ENCODE measurements at regions of chr6 and their contacts with region 1.

Region 1: DNA sequence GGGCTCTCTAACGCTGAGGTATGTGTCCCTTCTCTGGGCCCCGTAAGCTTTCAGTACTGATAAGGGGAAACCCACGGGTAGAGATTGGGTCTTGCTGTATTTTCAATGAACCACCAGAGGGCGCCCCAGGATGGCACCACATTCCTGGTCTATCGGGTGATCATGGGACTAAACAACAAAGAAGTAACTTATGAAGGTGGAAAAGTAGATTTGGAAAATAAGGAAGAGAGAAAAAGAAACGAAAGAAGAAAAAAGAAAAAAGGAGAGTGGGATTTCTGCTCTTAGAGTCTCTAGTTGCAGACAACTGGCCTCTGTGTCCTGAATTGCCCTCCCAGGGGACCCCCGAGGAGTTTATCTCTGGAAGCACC is 93.8 kb downstream of the GMPR start:
- DNase-seq: peak; percentile 89
- H3K4me3 ChIP-seq: peak overlapping the region; percentile 12
- H3K27ac ChIP-seq: peak overlapping the region; percentile 3
- H3K4me1 ChIP-seq: peaks cover 20% of the 10 kb centered on the region
- H3K27me3 ChIP-seq: no peaks in the 10 kb centered on the region
- CTCF ChIP-seq: peak; percentile 94

Region 2: DNA sequence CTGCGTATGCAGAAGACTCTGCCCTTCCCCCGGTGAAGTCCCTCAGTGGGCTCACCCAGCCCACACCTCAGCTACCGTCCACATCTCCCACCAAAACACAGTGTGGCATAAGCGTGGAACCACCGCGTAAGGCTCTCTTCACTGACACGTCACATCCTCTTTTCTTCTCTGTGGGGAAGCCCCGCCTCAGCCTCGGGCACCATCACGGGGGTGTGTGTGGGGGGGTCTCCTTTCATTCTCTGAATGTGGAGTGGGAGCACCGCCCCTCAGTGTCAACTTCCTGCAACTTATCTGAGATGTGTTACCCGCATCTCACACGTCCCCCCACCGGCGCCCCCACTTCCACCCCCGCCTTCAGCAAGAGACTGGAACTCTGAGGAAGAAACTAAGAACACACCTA is 1474.7 kb before region 1 on chr6:
- CTCF ChIA-PET with region 1: no interaction called
- POLR2A ChIA-PET with region 1: no interaction called
- intact Hi-C with region 1: no loop called
- DNase-seq: no peak
- H3K4me3 ChIP-seq: no peak overlapping the region
- H3K27ac ChIP-seq: no peak overlapping the region
- H3K4me1 ChIP-seq: peaks cover 12% of the 10 kb centered on the region
- H3K27me3 ChIP-seq: no peaks in the 10 kb centered on the region
- CTCF ChIP-seq: no peak

Region 3: DNA sequence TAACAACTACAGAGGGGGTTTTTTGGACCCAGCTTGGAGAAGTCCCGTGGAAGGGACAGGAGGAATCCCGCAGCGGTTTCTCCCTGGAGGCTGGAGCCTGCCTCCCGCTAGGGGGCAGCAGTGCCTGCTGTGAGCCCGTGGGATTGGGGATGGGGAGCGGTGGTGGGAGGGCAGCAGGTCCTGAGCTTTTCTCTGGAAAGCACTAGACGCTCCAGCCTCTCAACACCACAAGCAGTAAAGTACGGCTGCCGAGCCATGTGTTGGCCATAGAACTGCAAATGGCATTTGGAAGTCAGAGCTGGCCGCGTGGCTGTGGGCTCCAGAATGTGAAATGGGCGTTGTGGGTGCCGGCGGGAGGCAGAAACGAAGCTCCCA is 46.0 kb before region 1 on chr6:
- CTCF ChIA-PET with region 1: interaction called, 3 read pairs
- POLR2A ChIA-PET with region 1: no interaction called
- intact Hi-C with region 1: loop called (anchors 2 kb)
- DNase-seq: peak; percentile 77
- H3K4me3 ChIP-seq: no peak overlapping the region
- H3K27ac ChIP-seq: no peak overlapping the region
- H3K4me1 ChIP-seq: no peaks in the 10 kb centered on the region
- H3K27me3 ChIP-seq: no peaks in the 10 kb centered on the region
- CTCF ChIP-seq: peak; percentile 98

Region 4: DNA sequence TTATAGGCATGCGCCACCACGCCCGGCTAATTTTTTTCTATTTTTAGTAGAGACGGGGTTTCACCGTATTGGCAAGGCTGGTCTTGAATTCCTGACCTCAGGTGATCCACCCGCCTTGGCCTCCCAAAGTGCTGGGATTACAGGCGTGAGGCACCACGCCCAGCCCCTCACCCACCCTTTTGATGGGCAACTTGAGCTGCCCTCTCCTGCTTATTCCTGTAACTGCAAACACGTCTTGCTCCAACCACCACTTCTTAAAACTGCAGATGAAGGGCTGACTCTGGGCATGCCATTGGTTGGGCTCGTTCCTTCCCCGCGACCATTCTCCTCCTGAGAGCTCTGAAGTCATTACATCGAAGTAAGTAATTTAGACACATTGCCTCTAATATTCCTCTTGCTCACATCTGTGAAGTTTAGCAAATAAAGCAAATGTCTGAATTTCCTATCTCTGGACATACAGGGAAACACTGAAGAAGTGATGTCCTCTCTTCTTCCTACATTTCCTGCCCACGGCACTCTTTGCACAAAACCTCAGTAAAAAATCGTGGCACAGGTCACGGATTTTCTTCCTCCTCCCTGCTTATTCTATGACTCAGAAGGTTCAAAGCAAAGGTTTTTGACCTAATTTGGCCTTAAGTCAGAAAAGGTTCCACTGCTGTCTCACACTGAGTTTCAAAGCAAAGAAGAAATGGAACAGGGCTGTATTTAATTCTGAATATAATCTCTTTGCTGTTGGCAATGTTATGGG is 23.7 kb after region 1 on chr6:
- CTCF ChIA-PET with region 1: no interaction called
- POLR2A ChIA-PET with region 1: no interaction called
- intact Hi-C with region 1: no loop called
- DNase-seq: no peak
- H3K4me3 ChIP-seq: no peak overlapping the region
- H3K27ac ChIP-seq: no peak overlapping the region
- H3K4me1 ChIP-seq: no peaks in the 10 kb centered on the region
- H3K27me3 ChIP-seq: no peaks in the 10 kb centered on the region
- CTCF ChIP-seq: no peak

Region 5: DNA sequence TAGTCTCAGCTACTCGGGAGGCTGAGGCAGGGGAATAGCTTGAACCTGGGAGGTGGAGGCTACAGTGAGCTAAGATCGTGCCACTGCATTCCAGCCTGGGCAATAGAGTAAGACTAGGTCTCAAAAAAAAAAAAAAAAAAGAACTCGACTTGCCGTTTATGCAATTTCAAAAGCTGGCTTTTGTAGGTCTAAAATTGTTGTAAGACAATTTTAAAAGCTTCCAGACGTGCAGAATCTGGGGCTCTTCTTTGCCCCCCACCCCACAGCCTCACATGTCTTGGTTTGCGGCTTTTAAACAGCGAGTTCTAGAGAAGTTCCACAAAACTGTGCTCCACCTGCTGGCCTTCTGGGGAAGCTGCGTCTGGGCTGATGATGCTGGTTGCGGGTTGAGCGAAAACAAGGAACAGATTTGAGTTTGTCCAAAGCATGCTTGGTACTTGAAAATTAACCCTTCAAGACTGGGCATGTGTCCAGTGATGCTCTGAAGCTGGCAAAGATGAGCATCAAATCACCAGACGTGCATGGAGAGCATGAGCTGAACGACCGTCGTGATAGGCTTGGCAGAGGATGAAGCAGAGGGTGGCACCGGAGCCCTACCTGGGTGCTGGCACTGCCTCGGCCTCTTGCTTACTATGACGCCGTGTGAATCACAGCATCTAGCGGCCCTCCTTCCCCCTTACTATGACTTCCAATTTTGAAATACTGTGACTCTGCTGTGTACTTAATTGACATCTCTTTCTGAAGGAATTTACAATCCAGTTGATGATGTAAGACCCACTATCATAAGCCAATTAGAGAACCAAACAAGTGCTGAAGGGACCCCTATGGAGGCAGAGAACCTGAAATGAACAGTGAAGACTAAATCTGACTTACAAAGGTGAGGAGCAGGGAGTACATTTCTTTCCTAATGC is 77.6 kb after region 1 on chr6:
- CTCF ChIA-PET with region 1: interaction called, 6 read pairs
- POLR2A ChIA-PET with region 1: no interaction called
- intact Hi-C with region 1: loop called (anchors 2 kb)
- DNase-seq: peak; percentile 80
- H3K4me3 ChIP-seq: peak overlapping the region; percentile 13
- H3K27ac ChIP-seq: no peak overlapping the region
- H3K4me1 ChIP-seq: peaks cover 26% of the 10 kb centered on the region
- H3K27me3 ChIP-seq: no peaks in the 10 kb centered on the region
- CTCF ChIP-seq: peak; percentile 94

Region 6: DNA sequence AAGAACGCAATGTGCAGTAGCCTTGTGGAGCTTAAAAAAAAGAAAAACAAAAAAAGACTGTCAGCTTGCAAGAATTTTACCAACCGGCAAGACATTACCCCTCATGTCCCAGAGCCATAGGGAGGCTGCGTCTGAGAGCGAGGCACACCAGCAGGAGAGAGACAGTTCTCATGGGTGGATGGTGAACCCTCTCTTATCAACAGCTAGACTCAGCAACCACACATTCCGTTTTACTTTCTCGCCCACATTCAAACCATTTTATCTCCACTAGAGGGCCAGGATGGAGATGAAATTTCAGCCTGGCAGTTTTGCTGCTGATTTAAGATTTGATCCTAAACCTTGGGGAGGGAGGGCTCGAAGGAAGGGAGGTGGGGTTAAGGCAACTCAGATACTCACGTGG is 182.1 kb after region 1 on chr6:
- CTCF ChIA-PET with region 1: no interaction called
- POLR2A ChIA-PET with region 1: no interaction called
- intact Hi-C with region 1: loop called (anchors 5 kb)
- DNase-seq: peak; percentile 81
- H3K4me3 ChIP-seq: no peak overlapping the region
- H3K27ac ChIP-seq: no peak overlapping the region
- H3K4me1 ChIP-seq: no peaks in the 10 kb centered on the region
- H3K27me3 ChIP-seq: no peaks in the 10 kb centered on the region
- CTCF ChIP-seq: peak; percentile 67

Region 7: GRCh38 chr6:16651871-16652270 is 319.7 kb after region 1 on chr6:
- CTCF ChIA-PET with region 1: no interaction called
- POLR2A ChIA-PET with region 1: no interaction called
- intact Hi-C with region 1: no loop called
- DNase-seq: no peak
- H3K4me3 ChIP-seq: no peak overlapping the region
- H3K27ac ChIP-seq: no peak overlapping the region
- H3K4me1 ChIP-seq: no peaks in the 10 kb centered on the region
- H3K27me3 ChIP-seq: no peaks in the 10 kb centered on the region
- CTCF ChIP-seq: no peak

Region 8: DNA sequence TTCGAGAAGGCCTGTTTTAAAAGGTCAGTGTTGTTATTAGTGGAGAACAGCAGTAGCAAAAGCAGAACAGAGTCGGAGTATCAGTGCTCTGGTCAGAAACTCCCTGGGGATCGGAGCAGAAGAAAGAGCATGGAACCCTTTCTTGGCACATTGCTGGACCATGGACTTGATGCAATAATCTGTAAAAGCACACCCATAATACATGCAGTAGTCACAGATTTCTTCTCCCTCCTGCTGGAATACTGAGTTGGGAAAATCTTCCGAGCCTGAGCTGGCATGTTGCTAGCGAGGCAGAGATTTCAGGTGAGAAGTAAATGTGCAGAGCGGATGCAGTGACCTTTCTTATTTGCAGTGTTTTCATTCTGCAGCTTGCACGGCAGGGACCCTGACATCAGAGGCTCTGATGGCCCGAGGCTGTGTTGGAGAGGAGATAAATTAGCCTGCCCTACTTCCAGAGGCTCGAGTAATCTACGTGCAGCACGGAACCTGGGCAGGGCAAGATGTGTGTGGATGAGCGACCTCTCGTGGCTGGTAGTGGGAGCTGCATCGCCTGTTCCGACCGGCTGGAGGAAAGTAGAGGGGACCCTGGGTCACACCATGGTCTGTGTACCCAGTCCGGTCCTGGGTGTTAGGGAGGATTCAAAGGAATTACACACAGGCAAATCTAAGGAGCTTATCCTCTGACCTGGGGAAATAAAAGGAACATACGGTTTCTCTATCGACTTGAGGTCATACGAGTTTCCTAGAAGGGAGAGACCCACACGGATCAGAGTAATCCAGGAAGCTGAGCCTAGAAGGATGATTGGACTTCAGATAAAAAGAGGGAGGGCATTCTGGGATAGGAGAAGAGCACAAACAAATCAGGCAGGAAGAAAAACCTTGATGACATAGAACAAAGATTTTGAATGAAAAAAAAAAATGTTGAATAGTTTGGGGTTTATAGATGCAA is 632.7 kb after region 1 on chr6:
- CTCF ChIA-PET with region 1: no interaction called
- POLR2A ChIA-PET with region 1: no interaction called
- intact Hi-C with region 1: loop called (anchors 10 kb)
- DNase-seq: peak; percentile 91
- H3K4me3 ChIP-seq: no peak overlapping the region
- H3K27ac ChIP-seq: no peak overlapping the region
- H3K4me1 ChIP-seq: peaks cover 35% of the 10 kb centered on the region
- H3K27me3 ChIP-seq: no peaks in the 10 kb centered on the region
- CTCF ChIP-seq: peak; percentile 99

Region 9: GRCh38 chr6:16999491-17000436 is 667.6 kb after region 1 on chr6:
- CTCF ChIA-PET with region 1: no interaction called
- POLR2A ChIA-PET with region 1: no interaction called
- intact Hi-C with region 1: loop called (anchors 10 kb)
- DNase-seq: no peak
- H3K4me3 ChIP-seq: no peak overlapping the region
- H3K27ac ChIP-seq: no peak overlapping the region
- H3K4me1 ChIP-seq: peaks cover 22% of the 10 kb centered on the region
- H3K27me3 ChIP-seq: no peaks in the 10 kb centered on the region
- CTCF ChIP-seq: no peak

Region 10: GRCh38 chr6:17086469-17086868 is 754.3 kb after region 1 on chr6:
- CTCF ChIA-PET with region 1: no interaction called
- POLR2A ChIA-PET with region 1: no interaction called
- intact Hi-C with region 1: loop called (anchors 2 kb)
- DNase-seq: peak; percentile 79
- H3K4me3 ChIP-seq: no peak overlapping the region
- H3K27ac ChIP-seq: no peak overlapping the region
- H3K4me1 ChIP-seq: peaks cover 12% of the 10 kb centered on the region
- H3K27me3 ChIP-seq: no peaks in the 10 kb centered on the region
- CTCF ChIP-seq: peak; percentile 72